WTC11 (cell line): ENCODE measurements at regions of chr6 and their contacts with region 1.

Region 1: DNA sequence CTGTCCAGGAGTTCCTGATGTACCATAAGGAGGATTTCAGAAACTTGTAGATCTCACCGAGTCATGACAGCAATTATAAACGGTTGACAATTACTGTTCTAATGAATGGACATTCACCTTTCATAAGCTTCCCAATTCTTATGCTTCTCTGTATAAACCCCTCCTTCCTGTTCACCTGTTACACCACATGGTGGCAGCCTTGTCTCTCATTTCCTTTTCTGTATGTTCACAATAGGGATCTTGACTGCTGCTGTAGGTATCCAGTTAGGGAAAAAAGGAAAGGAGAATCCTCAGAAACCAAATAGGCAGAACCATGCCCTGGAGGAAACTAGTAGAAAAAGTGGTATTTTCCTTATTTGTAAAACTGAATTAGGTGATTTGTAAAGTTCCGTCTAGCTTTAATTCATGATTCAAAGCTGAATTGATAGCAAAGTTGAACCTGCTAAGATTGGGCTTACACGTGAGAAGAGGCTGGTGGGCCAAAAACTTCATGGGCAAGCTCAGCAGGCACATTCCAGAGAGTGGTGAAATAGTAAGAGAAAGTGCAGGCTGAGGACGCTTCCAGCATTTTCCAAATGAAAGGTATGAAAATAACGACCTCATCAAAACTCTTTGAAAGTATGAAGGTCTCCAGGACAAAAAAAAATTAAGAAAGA is 29.0 kb upstream of the TBPL1 start:
- DNase-seq: peak; percentile 65
- ATAC-seq: peak; percentile 93
- H3K4me3 Mint-ChIP-seq: peak overlapping the region; percentile 53
- H3K27ac Mint-ChIP-seq: no peak overlapping the region; the same call in 1 of the 2 replicates
- H3K4me1 Mint-ChIP-seq: peaks cover 11% of the 10 kb centered on the region
- H3K27me3 Mint-ChIP-seq: no peaks in the 10 kb centered on the region
- CTCF ChIP-seq: peak; percentile 62

Region 2: DNA sequence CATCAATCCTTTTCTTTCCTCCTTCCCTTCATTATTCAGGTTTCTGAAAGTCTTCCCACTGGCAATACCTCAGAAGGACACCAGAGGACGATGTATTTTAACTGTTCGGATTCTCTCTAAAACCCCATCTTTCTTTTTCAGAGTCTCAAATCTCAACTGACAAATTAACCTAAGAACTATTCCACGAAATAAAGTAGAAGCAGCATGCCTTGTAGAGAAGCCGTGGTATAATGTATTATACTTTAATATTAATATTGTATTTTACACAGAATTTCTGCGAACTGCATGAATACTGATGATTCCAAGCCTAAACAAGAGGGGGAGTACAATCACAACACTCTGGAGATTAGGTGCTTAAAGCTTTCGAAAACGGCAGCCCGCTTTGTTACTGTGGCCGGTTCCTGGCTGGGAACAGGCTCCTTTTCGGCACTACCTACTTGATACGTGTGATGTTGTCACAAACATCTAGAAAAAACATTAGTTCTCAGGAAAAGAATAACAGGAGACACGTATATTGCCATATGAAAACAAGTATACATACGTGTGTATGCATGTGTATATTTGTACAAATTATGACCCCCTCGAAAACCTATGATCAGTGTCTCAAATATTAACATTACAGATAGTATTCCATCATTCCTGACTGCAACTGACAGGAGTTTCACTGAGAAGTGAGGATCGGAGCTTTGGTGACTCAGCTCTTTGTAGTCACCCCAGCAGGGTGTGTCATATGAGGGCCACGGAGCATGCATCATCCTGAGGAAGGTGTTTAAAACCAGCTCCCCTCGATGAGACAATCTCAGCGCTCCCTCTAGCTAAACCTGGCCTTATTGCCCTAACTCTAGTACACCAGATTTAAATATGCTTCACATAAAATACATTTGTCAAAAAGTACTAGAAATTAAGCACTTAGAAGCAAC is 354.8 kb before region 1 on chr6:
- CTCF ChIA-PET with region 1: interaction called, 24 read pairs
- POLR2A ChIA-PET with region 1: no interaction called
- DNase-seq: peak; percentile 36
- ATAC-seq: peak; percentile 90
- H3K4me3 Mint-ChIP-seq: peak overlapping the region; percentile 77
- H3K27ac Mint-ChIP-seq: peak overlapping the region; percentile 92
- H3K4me1 Mint-ChIP-seq: peaks cover 7% of the 10 kb centered on the region
- H3K27me3 Mint-ChIP-seq: no peaks in the 10 kb centered on the region
- CTCF ChIP-seq: peak; percentile 78

Region 3: DNA sequence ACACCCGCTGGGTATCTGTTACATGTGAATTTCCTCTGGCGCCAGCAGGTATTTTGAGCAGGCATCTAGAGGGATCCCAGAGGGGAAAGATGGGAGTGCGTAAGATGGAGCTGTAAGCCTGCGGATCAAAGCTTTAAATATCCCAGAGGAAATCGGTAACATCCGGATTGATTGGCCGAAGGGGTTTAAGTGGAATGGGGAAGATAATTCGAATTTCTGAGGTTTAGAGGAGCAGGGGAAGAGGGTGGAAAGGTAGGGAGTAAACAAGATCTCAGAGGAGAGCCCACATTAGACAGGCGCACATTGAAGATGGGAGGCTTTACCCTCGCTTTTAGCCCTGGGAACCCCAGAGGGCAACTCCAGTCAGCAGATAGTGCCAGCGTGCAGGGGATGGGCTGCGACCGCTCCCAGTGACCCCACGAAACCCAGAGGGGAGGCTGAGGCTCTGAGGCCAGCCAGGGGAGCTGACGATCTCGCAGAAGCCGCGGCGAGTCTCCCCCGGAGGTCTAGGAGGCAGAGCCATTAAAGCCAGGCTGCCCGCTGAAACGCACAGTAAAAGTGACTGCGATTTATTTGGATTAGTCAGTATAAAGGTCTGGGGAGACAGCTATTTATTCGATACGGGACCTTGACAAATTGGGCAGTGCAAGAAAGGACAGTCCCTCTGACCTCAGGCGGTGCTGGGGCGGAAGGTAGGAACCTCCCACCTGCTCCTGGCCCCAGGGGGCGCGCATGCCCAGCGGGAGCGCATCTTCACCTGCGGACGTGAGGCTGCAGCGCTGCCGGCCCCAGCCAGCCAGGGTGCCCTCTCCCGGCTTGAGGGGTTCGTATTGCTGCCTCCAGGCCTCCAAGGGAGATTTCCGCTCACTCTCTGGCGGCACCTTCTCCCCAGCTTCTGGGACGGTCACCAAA is 69.4 kb before region 1 on chr6:
- CTCF ChIA-PET with region 1: interaction called, 11 read pairs
- POLR2A ChIA-PET with region 1: no interaction called
- DNase-seq: peak; percentile 59
- ATAC-seq: peak; percentile 79
- H3K4me3 Mint-ChIP-seq: peak overlapping the region; percentile 87
- H3K27ac Mint-ChIP-seq: no peak overlapping the region
- H3K4me1 Mint-ChIP-seq: peaks cover 26% of the 10 kb centered on the region
- H3K27me3 Mint-ChIP-seq: peaks cover 38% of the 10 kb centered on the region
- CTCF ChIP-seq: no peak

Region 4: GRCh38 chr6:133973109-133973971 is 49.3 kb after region 1 on chr6:
- CTCF ChIA-PET with region 1: interaction called, 19 read pairs
- POLR2A ChIA-PET with region 1: no interaction called
- DNase-seq: no peak
- ATAC-seq: peak; percentile 61
- H3K4me3 Mint-ChIP-seq: no peak overlapping the region
- H3K27ac Mint-ChIP-seq: peak overlapping the region; percentile 58; the same call in 1 of the 2 replicates
- H3K4me1 Mint-ChIP-seq: peaks cover 47% of the 10 kb centered on the region
- H3K27me3 Mint-ChIP-seq: no peaks in the 10 kb centered on the region
- CTCF ChIP-seq: peak; percentile 45

Region 5: DNA sequence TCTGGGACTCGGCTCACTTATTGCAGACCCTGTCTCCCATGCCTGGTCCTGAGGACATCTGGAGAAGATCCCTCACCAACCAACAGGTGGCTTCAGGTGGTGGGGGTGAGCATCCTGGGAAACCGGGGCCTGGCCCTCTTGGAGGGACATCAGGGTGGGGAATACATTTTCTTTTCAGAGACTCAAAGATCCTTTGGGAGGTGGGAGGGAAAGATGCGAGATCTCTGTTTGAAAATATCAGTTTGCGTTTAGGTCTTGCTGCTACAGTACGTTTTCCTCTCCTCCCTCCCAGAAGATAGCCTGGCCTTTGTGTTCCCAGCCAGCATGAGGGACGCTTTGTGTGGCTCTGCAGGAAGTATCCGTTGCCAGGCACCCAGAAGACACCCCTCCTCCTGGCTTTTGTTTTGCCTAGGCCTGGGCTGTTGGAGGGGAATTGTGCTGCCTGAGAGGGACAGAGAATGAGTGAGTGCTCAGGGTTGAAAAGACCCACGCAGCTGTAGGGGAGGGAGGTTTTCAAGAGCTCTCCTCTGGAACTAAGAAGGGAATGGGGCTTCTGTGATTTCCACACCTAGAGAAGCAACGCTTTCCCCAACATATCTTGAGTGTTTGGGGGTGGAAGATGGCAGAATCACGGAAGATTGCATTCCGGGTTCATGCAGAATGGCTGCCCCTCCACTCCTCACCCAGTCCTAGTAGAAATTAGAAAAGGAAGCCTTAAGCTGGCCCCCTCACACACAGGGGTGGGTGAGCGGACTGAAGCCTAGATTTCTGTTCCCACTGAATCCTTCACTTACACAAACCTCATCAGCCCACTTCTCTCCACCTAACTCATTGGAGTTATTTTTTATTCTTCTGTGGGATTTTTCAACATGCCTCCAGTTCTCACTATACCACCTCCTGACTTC is 150.3 kb after region 1 on chr6:
- CTCF ChIA-PET with region 1: interaction called, 12 read pairs
- POLR2A ChIA-PET with region 1: no interaction called
- DNase-seq: peak; percentile 75
- ATAC-seq: peak; percentile 99
- H3K4me3 Mint-ChIP-seq: peak overlapping the region; percentile 56
- H3K27ac Mint-ChIP-seq: peak overlapping the region; percentile 83
- H3K4me1 Mint-ChIP-seq: peaks cover 18% of the 10 kb centered on the region
- H3K27me3 Mint-ChIP-seq: no peaks in the 10 kb centered on the region
- CTCF ChIP-seq: no peak

Region 6: GRCh38 chr6:134235937-134236751 is 312.1 kb after region 1 on chr6:
- CTCF ChIA-PET with region 1: no interaction called
- POLR2A ChIA-PET with region 1: no interaction called
- DNase-seq: no peak
- ATAC-seq: no peak
- H3K4me3 Mint-ChIP-seq: no peak overlapping the region
- H3K27ac Mint-ChIP-seq: no peak overlapping the region
- H3K4me1 Mint-ChIP-seq: peaks cover 23% of the 10 kb centered on the region
- H3K27me3 Mint-ChIP-seq: no peaks in the 10 kb centered on the region
- CTCF ChIP-seq: no peak